HepG2 (cell line): ENCODE measurements at regions of chr11 and their contacts with region 1.

Region 1: DNA sequence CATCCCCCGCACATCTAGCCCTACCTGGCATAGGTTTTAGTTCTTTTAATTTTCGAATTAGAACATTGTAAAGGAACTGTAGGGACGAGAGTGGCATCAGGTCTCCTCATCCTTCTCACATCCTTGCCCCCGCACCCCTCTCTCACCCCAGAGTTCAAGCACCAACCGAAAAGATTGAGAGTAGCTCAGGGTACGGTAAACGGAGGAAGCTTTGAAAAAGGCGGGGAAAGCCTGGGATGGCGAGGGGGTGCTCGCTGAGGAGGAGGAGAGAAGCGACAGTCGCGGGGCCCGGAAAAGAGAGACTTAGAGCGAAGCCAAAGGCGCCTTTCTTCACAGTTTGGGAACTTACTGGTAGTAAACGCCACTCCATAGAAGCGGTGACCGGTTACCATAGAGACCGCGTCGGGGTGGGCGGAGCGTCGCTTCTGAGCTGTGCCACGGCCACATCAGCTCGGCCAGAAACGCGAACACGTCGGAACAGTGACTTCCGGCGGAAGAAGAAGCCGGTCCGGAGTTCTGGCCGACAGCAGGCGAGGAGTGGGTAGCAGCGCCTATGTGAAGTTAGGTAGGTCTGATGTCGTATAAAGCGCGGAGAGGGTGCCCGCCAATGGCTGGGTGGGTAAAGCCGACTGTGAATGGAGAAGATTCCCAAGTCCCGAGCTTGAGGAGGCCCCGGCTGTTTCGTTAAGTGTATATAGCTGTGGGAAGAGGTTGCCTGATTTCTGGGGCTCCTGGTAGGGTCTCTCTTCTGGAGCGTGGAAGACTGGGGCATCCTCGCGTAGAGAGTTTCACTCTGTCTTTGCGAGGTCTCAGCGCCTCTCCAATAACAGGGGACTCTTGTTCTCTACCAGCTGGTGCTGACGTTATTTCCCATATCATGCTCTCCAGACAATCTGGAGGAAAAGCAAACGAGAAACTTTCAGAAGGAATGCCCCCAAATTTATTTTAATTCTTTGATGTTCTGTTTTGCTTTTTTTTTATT is at the starts of genes DCDC1 and DNAJC24:
- DNase-seq: peak; percentile 91
- ATAC-seq: peak; percentile 99
- H3K4me3 ChIP-seq: peak within 1 kb of the TSS; percentile 70 to 97 (median 74)
- H3K27ac ChIP-seq: peak within 1 kb of the TSS; percentile 79
- H3K4me1 ChIP-seq: peaks cover 20% of the 10 kb centered on the region
- H3K27me3 ChIP-seq: no peaks in the 10 kb centered on the region; a peak in 1 of 5 replicates
- CTCF ChIP-seq: peak; percentile 12; the same call in 1 of the 2 replicates
- EP300 ChIP-seq: peak in 1 of 2 experiments; percentile 25; a peak in 2 of 4 replicates
- POLR2A ChIP-seq: peak; percentile 85
- RAD21 ChIP-seq: 0 out of 2 replicates have a peak, but pooled peaks have one; percentile 23
- total RNA-seq, gene DCDC1: 0.24 and 0.27 TPM in 2 replicates
- total RNA-seq, gene DNAJC24: 12.0 and 13.7 TPM in 2 replicates

Region 2: DNA sequence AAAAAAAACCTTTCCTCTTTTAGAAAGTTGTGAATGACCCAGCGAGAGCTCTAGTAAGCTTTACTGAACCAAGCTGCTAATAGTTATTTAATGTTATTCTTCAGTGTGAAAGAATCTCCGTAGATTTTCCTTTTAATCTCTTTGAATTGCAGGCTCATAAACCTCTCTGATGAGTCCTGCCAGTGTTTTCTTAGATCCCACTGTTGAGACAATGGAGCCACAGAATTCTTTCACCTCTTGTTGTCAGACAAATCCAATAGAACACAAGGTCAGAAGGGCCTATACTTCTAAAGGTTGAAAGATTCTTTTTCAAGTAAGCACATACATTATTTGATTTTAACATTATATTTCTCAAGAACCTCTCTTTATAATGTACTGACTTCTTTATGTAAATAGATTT is 52.2 kb after region 1 on chr11:
- CTCF ChIA-PET with region 1: no interaction called
- POLR2A ChIA-PET with region 1: no interaction called
- in situ Hi-C with region 1: no loop called
- intact Hi-C with region 1: loop called (anchors 2 kb)
- DNase-seq: peak; percentile 5
- ATAC-seq: no peak
- H3K4me3 ChIP-seq: no peak overlapping the region
- H3K27ac ChIP-seq: no peak overlapping the region
- H3K4me1 ChIP-seq: no peaks in the 10 kb centered on the region
- H3K27me3 ChIP-seq: no peaks in the 10 kb centered on the region
- CTCF ChIP-seq: no peak
- EP300 ChIP-seq: no peak
- POLR2A ChIP-seq: no peak
- RAD21 ChIP-seq: no peak

Region 3: DNA sequence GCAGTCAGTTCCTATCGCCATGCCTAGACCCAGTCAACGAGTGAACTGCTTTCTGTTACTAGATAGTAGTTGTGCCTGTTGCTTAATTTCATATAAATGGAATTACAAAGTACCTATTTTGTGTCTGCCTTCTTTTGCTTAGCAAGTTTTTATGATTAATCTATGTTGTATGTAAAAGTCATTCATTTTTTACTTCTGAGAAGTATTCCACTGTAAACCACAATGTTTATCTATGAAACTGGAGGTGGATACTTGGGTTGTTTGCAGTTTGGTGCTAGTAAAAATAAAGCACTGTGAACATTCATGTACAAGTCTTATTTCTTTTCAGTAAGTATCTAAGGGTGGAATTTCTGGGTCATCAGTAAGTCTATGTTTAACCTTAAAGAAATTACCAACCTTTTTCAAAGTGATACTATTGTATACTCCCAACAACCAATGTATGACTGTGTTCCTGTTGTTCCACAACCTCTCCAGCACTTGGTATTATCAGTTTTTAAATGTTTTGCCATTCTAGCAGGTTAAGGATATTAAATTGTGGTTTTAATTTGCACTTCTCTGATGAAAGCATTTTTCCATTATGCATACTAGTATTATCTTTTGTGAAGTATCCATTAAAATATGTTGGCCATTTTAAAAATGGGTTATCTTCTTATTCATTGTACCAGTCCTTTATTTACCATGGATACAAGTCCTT is 68.2 kb after region 1 on chr11:
- CTCF ChIA-PET with region 1: no interaction called
- POLR2A ChIA-PET with region 1: no interaction called
- in situ Hi-C with region 1: no loop called
- intact Hi-C with region 1: no loop called
- DNase-seq: no peak
- ATAC-seq: no peak
- H3K4me3 ChIP-seq: no peak overlapping the region
- H3K27ac ChIP-seq: no peak overlapping the region
- H3K4me1 ChIP-seq: no peaks in the 10 kb centered on the region
- H3K27me3 ChIP-seq: no peaks in the 10 kb centered on the region
- CTCF ChIP-seq: no peak
- EP300 ChIP-seq: no peak
- POLR2A ChIP-seq: no peak
- RAD21 ChIP-seq: no peak